GM18951 (cell line): ENCODE measurements at regions of chr21 and their contacts with region 1.

Region 1: DNA sequence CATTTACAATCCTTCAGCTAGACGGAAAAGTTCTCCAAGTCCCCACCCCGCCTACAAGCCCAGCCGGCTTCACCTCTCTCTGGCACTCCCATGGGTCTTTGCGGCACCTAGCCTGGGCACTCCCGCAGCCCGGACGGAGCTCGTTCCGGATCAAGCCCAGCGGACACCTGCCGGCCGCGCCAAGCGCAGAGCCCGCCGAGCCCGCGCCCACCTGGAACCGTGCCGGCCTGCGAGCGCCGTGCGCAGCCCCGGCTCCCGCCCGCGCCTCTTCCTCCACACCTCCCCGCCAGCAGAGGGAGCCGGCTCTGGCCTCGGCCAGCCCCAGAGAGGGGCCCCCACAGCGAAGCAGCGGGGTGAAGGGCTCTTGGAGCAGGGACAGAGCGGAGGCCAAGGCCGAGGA is 50.0 kb upstream of the KRTAP19-8 start:
- POLR2A ChIP-seq: no peak

Region 2: GRCh38 chr21:30831194-30831765 is 257.0 kb before region 1 on chr21:
- in situ Hi-C with region 1: loop called (anchors 10 kb)
- POLR2A ChIP-seq: no peak

Region 3: DNA sequence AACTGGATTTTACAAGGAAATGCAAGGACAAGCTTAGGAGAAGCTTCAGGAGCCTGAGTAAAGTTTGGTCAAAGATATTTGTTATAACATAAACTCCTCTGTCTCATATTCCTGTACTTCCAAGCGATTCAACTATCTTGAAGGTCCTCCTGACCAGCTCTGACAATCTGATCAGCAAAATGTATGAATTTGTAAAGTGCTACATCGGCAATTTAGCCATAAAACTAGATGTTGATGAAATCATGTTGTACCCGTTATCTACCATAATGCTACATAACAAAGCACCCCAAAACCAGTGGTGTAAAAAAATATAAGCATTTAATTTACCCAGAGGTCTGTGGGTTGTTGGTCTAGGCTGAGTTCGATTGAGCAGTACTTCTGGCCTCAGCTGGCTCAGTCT is 187.4 kb before region 1 on chr21:
- in situ Hi-C with region 1: no loop called
- POLR2A ChIP-seq: no peak